ENCODE measurements at regions of chr22 and their contacts with region 1.

Region 1: DNA sequence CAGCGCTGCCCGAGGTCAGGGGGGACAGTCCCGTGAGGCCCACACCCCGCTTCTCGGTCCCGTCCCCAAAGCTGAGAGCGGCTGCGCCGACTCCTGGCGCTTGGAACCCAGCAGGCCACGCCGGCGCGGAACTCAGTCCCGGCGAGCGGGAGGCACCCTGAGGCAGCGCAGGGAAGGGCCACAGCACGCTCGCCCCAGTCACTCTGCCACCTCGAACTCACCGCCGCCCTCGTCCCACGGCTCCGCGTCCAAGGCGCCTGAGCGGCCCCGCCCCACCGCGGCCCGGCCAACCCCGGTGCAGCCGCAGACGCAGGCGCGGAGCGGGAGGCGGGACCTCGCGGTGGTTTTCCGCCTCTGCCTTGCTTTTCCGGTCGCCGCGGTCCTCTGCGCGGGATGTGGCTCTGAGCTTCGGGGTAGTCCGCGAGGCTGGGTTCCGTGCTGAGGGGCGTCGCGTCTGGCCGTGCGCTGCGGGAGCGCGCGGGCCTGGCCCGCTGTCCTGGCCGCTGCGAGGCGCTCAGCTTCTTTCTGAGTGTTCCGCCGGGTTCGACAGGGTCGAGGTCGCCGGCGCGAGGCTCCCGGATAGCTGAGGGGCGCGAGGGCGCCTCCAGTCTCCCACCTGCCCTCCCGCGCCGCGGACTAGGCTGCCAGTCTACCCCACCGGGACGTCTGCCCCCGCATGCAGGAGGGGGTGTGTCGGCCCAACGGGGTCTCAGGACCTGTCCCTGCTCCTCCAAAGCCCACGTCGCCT is at the start of gene CDPF1:
- DNase-seq: peak; percentile 93
- H3K4me3 ChIP-seq: peak within 1 kb of the TSS; percentile 92
- H3K27ac ChIP-seq: peak within 1 kb of the TSS; percentile 83
- H3K4me1 ChIP-seq: peaks cover 4% of the 10 kb centered on the region
- H3K27me3 ChIP-seq: no peaks in the 10 kb centered on the region
- CTCF ChIP-seq: no peak
- total RNA-seq, gene CDPF1: 5.8 to 11.2 TPM

Region 2: DNA sequence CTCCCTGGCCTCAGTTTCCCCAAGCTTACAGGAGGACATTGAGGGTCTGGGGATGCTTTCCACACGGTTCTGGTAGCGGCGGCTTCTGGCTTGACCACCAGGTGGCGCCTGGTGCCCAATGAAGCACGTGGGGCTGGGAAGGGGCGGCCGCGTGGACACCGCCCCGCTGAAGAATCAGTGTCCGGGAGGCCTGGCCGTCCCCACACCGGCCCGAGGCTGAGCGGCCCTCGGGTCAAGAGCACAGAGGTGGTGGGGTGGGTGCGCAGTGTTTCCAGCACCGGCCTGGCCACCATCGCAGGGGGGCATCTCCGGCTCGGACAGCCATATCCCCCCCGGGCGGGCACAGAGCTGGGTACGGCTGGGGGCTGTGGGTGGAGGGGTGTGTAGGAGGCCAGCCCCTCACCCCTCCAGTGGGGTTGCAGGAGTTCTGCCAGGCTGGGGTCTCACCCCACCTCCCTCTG is 127.7 kb before region 1 on chr22:
- intact Hi-C with region 1: loop called (anchors 10 kb)
- DNase-seq: peak; percentile 82
- H3K4me3 ChIP-seq: no peak overlapping the region
- H3K27ac ChIP-seq: no peak overlapping the region
- H3K4me1 ChIP-seq: peaks cover 4% of the 10 kb centered on the region
- H3K27me3 ChIP-seq: no peaks in the 10 kb centered on the region
- CTCF ChIP-seq: peak; percentile 87

Region 3: GRCh38 chr22:46149512-46150033 is 100.6 kb before region 1 on chr22:
- intact Hi-C with region 1: loop called (anchors 10 kb)
- DNase-seq: peak; percentile 84
- H3K4me3 ChIP-seq: peak overlapping the region; percentile 84
- H3K27ac ChIP-seq: peak overlapping the region; percentile 90
- H3K4me1 ChIP-seq: peaks cover 4% of the 10 kb centered on the region
- H3K27me3 ChIP-seq: no peaks in the 10 kb centered on the region
- CTCF ChIP-seq: no peak

Region 4: GRCh38 chr22:46296257-46297150 is 46.3 kb after region 1 on chr22 and contains the start of gene GTSE1:
- intact Hi-C with region 1: loop called (anchors 5 kb)
- DNase-seq: peak; percentile 98
- H3K4me3 ChIP-seq: peak within 1 kb of the TSS; percentile 78
- H3K27ac ChIP-seq: peak within 1 kb of the TSS; percentile 95
- H3K4me1 ChIP-seq: peaks cover 17% of the 10 kb centered on the region
- H3K27me3 ChIP-seq: no peaks in the 10 kb centered on the region
- CTCF ChIP-seq: no peak
- total RNA-seq, gene GTSE1: 7.8 to 38.8 TPM

Measured in colonic mucosa (tissue), 4 donors.